Activated CD4-positive, alpha-beta T cell treated with anti-CD3 and anti-CD28 coated beads for 36 hours (primary cell): ENCODE measurements at regions of chr6 and their contacts with region 1.

Region 1: GRCh38 chr6:132401120-132401945 is at the start of gene MOXD1:
- DNase-seq: peak; percentile 12
- ATAC-seq: peak; percentile 34
- H3K4me3 Mint-ChIP-seq: peak within 1 kb of the TSS; percentile 8
- H3K27ac Mint-ChIP-seq: no peak within 1 kb of the TSS
- H3K4me1 Mint-ChIP-seq: peaks cover 17% of the 10 kb centered on the region
- H3K27me3 Mint-ChIP-seq: peaks cover 58% of the 10 kb centered on the region
- total RNA-seq, gene MOXD1: not detected

Region 2: DNA sequence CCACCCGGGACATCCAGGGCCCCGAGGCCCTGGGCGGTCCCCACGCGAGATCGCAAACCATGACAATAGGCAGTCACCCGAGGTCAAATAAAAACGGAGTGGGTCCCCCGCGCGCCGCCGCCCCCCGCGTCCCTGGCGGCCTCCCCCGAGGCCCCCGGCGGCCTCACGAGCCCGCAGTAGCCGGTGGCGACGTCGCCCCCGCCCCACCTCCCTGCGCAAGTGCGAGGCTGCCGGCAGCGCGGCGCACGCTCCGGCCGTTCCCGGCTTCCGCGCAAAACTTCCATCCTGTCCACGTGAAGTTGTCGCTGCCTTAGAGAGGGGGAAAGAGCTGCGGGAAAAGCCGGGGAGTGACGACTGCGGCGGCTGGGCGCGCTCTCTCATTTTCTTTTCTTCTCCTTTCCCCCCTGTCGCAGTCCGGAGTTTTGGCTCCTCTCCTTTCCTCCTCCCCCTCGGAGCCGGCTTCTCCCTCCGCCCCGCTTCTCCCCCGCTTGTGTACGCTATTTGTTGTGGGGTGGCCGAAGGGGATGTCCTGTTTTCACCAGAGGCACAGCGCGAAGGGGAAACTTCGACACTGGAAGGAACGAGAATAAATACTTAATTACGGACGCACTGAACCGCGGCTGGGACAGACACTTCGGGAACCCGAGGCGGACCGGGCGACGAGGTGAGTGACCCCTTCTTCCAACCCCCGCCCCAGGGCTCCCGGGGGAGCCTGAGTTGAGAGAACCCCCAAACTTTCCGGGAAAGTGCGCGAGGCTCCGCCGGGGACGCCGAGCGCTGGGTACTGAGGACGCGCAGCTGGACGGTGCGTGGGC is 840.0 kb after region 1 on chr6 and contains the start of gene EYA4:
- CTCF ChIA-PET with region 1: no interaction called
- POLR2A ChIA-PET with region 1: no interaction called
- intact Hi-C with region 1: loop called in 1 of 2 experiments (anchors 10 kb)
- DNase-seq: no peak
- ATAC-seq: no peak
- H3K4me3 Mint-ChIP-seq: no peak within 1 kb of the TSS
- H3K27ac Mint-ChIP-seq: no peak within 1 kb of the TSS
- H3K4me1 Mint-ChIP-seq: peaks cover 10% of the 10 kb centered on the region
- H3K27me3 Mint-ChIP-seq: peaks cover 40% of the 10 kb centered on the region
- total RNA-seq, gene EYA4: not detected